Right ventricle myocardium superior (tissue), 1 donor: ENCODE measurements at regions of chrX and their contacts with region 1.

Region 1: GRCh38 chrX:43741843-43742573 is 85.9 kb downstream of the MAOA start:
- DNase-seq: no peak
- ATAC-seq: peak; percentile 89

Region 2: GRCh38 chrX:43654431-43655150 is 87.4 kb before region 1 on chrX:
- intact Hi-C with region 1: loop called (anchors 10 kb)
- DNase-seq: peak; percentile 96
- ATAC-seq: peak; percentile 95